ENCODE measurements at regions of chr14 and their contacts with region 1.

Region 1: DNA sequence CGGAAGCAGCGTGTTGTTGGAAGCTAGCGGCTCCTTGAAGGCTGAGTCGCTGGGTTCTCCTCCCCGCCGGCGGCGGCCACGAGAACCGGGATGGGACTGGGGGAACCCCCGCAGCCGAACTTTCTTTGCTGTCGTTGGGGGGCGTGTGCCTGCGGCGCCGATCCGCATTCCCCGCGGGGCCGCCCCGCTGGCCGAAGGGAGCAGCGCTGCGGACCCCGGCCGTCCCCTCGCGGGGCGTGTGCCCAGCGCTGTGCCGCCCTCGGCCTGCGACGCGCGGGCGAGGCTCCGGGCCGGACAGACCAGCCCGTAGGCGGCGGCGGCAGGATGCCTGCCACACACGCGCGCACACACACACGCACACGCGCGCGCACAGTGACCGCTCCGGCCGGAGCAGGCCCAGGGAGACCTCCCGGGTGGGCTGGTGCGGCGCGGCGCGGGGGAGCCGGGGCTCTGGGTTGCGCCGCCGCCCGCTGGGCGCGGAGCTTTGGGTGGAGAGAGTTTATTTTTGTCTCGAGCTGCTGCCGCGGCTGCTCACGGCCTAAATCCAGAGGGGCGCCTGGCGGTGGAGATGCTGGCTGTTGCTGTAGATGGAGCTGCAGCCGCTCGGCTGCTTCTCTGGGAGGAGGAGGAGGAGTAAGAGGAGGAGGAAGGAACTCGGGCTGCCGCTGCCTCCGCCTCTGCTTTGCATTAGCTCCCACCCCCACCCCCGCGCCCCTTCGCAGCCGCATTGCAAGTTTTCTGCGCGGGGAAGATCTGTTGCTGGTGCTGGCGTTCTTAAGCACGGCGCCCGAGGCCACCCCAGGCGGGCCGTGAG is at the start of gene SAMD4A:
- DNase-seq: peak; percentile 17 to 69 (median 49)
- ATAC-seq: peak; percentile 20 to 46 (median 30)
- H3K4me3 ChIP-seq: peak within 1 kb of the TSS; percentile 68 to 95
- H3K4me3 Mint-ChIP-seq: peak within 1 kb of the TSS; percentile 90 to 97 (median 91)
- H3K27ac ChIP-seq: peak within 1 kb of the TSS; percentile 23
- H3K27ac Mint-ChIP-seq: peak within 1 kb of the TSS; percentile 46 to 89
- H3K4me1 ChIP-seq: peaks cover 6 to 33% of the 10 kb centered on the region in 2 experiments
- H3K4me1 Mint-ChIP-seq: peaks cover 13 to 21% (median 15%) of the 10 kb centered on the region in 3 donors
- H3K27me3 ChIP-seq: peaks cover 6 to 32% of the 10 kb centered on the region in 2 experiments
- H3K27me3 Mint-ChIP-seq: peaks cover 0 to 10% of the 10 kb centered on the region in 2 donors
- total RNA-seq, gene SAMD4A: 1.2 to 3.9 (median 1.3) TPM

Region 2: DNA sequence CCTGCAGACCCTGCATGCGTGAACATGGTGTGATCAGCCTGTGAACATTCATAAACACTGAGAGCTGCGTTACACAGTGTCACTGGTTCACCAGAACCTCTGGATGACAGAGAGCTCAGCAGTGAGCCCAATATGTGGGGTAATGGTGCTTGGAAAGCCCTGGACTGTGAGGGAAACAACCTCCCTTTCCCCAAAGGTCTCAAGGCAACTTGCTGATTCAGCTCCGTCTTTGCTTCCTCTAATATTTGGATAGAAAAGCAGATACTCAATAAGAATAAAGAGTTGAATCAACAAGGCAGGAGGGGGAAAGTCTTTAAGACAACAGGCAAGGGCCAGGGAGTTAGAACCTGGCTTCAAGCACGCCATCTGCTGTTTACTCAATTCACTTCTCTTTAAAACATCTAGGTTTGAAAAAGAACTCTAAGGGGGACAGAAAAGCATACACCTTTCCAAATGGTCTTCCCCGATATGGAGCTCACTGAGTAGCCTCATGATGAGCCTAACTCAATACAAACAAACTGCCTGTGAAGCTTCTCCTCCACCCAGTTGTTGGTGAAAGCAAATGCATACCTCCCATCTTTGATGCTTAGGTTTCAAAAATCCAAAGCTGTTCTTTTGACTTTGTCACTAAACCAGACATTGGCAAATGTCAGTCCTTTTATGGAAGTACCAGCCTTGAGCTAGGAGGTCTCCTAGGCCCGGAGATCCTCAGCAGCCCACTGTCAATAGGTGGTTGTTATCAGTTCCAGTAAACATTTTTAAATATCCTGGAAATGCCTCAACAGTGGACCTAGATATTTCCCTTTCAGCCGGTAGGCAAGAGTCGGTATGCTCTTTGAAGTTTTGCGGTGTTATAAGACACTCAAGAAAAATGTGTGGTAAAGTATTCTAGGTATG is 76.4 kb after region 1 on chr14:
- CTCF ChIA-PET with region 1: interaction called, 18 to 41 read pairs
- POLR2A ChIA-PET with region 1: no interaction called
- DNase-seq: peak in 5 of 35 experiments; percentile 2 to 47 (median 8)
- ATAC-seq: no peak
- H3K4me3 ChIP-seq: no peak overlapping the region
- H3K4me3 Mint-ChIP-seq: no peak overlapping the region
- H3K27ac ChIP-seq: no peak overlapping the region
- H3K27ac Mint-ChIP-seq: no peak overlapping the region
- H3K4me1 ChIP-seq: no peaks in the 10 kb centered on the region
- H3K4me1 Mint-ChIP-seq: no peaks in the 10 kb centered on the region
- H3K27me3 ChIP-seq: peaks cover 0 to 6% of the 10 kb centered on the region in 2 experiments
- H3K27me3 Mint-ChIP-seq: no peaks in the 10 kb centered on the region

Region 3: DNA sequence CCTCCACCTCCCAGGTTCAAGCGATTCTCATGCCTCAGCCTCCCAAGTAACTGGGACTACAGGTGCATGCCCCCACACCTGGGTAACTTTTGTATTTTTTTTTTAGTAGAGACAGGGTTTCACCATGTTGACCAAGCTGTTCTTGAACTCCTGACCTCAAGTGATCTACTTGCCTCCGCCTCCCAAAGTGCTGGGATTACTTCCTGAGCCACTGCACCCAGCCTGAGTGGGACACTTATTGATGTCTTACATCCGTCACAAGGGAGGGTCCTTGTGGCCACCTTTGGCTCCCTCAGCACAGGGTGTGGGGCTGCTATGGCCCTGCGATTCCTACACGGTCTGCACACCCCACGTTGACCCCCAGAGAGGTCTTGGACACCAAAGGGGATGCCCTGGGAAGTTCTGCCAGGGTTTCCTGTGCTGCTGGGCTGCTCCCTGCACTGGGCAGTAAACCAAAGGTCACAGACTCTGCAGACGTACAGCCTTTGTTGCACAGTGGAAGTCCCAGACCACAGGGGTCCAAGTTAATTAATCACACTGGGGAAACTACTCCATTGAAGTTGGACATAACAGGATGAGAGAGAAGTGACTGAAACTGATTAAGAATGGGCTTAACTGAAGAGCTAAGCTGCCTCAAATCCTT is 96.0 kb after region 1 on chr14:
- CTCF ChIA-PET with region 1: no interaction called
- POLR2A ChIA-PET with region 1: no interaction called
- DNase-seq: no peak
- ATAC-seq: no peak
- H3K4me3 ChIP-seq: no peak overlapping the region
- H3K4me3 Mint-ChIP-seq: no peak overlapping the region
- H3K27ac ChIP-seq: no peak overlapping the region
- H3K27ac Mint-ChIP-seq: no peak overlapping the region
- H3K4me1 ChIP-seq: no peaks in the 10 kb centered on the region
- H3K4me1 Mint-ChIP-seq: peaks cover 0 to 4% (median 0%) of the 10 kb centered on the region in 3 donors
- H3K27me3 ChIP-seq: peaks cover 0 to 10% of the 10 kb centered on the region in 2 experiments
- H3K27me3 Mint-ChIP-seq: peaks cover 0 to 6% of the 10 kb centered on the region in 2 donors

Region 4: GRCh38 chr14:54691525-54692283 is 125.1 kb after region 1 on chr14:
- CTCF ChIA-PET with region 1: interaction called, 6 to 29 read pairs
- POLR2A ChIA-PET with region 1: no interaction called
- DNase-seq: peak in 29 of 35 experiments; percentile 5 to 68 (median 27)
- ATAC-seq: peak; percentile 60 to 66 (median 63)
- H3K4me3 ChIP-seq: no peak overlapping the region
- H3K4me3 Mint-ChIP-seq: no peak overlapping the region
- H3K27ac ChIP-seq: no peak overlapping the region
- H3K27ac Mint-ChIP-seq: no peak overlapping the region
- H3K4me1 ChIP-seq: no peaks in the 10 kb centered on the region
- H3K4me1 Mint-ChIP-seq: no peaks in the 10 kb centered on the region
- H3K27me3 ChIP-seq: peaks cover 0 to 16% of the 10 kb centered on the region in 2 experiments
- H3K27me3 Mint-ChIP-seq: peaks cover 16 to 22% of the 10 kb centered on the region in 2 donors

Region 5: DNA sequence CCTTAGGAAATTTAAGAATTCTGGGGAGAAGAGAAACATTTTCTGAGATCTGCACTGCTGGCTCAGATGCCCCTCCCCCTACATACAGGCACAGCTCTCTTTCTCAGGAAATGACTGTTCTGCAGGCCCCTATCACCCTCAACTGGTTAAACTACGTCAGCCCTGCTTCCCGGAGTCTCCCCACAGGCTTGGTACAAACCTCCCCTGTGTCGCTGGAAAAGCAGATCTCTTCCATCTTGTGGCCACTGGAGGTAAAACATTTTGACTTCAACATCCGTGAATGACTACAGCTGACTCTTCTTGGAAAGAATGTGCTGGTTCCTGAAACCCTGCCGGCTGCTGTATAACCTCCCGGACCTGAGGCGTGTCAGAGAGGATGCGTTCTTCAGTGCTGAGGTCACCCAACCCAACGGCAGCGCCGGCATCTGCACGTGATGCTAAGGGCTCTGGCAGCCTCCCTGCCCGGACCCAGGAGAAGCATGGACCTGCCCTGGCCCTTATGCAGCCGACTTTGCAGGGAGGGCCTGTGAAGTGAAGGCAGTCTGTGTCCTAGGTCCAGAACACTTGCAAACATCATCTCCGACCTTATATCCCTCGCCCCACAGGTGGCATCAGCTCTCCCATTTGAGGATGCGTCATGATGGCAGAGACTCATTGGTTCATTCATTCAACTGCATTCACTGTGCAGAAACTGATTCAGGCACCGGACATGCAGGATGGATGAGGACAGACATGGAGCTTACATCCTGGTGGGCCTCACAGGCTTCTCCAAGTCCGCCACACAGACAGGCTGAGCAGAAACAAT is 206.8 kb after region 1 on chr14:
- CTCF ChIA-PET with region 1: interaction called, 64 to 97 read pairs
- POLR2A ChIA-PET with region 1: interaction called, 3 to 5 read pairs
- DNase-seq: peak; percentile 13 to 77 (median 54)
- ATAC-seq: peak; percentile 58 to 80 (median 72)
- H3K4me3 ChIP-seq: no peak overlapping the region
- H3K4me3 Mint-ChIP-seq: peak overlapping the region; percentile 49 to 64 (median 62)
- H3K27ac ChIP-seq: peak overlapping the region; percentile 40
- H3K27ac Mint-ChIP-seq: peak overlapping the region; percentile 82 to 83
- H3K4me1 ChIP-seq: peaks cover 5 to 27% of the 10 kb centered on the region in 2 experiments
- H3K4me1 Mint-ChIP-seq: peaks cover 29 to 33% (median 31%) of the 10 kb centered on the region in 3 donors
- H3K27me3 ChIP-seq: peaks cover 0 to 19% of the 10 kb centered on the region in 2 experiments
- H3K27me3 Mint-ChIP-seq: peaks cover 4% of the 10 kb centered on the region in 2 donors

Region 6: GRCh38 chr14:55398679-55399078 is 832.1 kb after region 1 on chr14:
- CTCF ChIA-PET with region 1: no interaction called
- POLR2A ChIA-PET with region 1: interaction called in 1 of 2 experiments, 11 read pairs
- DNase-seq: no peak
- ATAC-seq: no peak
- H3K4me3 ChIP-seq: no peak overlapping the region
- H3K4me3 Mint-ChIP-seq: no peak overlapping the region
- H3K27ac ChIP-seq: no peak overlapping the region
- H3K27ac Mint-ChIP-seq: no peak overlapping the region
- H3K4me1 ChIP-seq: no peaks in the 10 kb centered on the region
- H3K4me1 Mint-ChIP-seq: peaks cover 26 to 33% (median 28%) of the 10 kb centered on the region in 3 donors
- H3K27me3 ChIP-seq: no peaks in the 10 kb centered on the region
- H3K27me3 Mint-ChIP-seq: no peaks in the 10 kb centered on the region

Measured in T-cell (primary cell).